K562 (cell line): ENCODE measurements at regions of chr7 and their contacts with region 1.

Region 1: DNA sequence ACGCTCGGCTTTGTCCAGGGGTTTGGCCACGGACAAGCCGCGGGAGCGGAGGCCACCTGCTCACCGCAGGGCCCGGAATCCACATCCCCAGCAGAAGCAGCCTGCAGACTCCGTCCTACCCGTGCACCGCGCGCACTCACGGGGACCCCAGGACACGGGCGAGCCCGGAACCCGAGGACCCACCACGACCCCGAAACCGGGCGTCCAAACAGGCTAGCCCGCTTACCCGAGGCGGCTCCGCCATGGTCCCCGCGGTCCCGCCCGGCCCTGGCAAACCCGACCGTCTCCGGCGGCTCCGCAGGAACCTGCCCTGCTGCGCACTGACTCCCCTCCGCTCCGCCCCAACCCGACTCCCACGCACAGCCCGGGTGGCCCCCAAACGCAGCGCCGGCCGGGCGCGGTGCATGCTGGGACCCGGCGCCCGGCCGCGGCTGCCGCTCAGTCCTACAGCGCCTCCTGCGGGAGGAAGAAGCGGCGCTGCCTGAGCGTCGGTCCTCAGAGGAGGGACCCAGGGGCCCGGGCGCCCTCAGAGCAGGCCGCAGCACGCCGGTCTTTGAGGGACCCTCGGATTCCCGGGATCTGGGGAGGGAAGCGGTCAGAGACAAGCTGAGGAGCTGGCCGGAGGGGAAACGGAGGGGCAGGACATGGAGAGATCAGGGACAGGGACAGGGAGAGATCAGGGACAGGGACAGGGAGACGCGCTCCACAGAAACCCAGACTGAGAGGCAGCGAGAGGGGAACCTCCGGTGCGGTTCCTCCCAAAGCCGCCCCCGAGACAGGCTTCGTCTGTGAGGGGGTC is at the start of gene ZNF786:
- DNase-seq: peak; percentile 96 to 99 (median 98)
- ATAC-seq: peak; percentile 93
- H3K4me3 ChIP-seq: peak within 1 kb of the TSS; percentile 93
- H3K27ac ChIP-seq: peak within 1 kb of the TSS; percentile 74
- H3K4me1 ChIP-seq: peaks cover 7 to 29% of the 10 kb centered on the region in 2 experiments
- H3K27me3 ChIP-seq: no peaks in the 10 kb centered on the region
- CTCF ChIP-seq: peak; percentile 97 to 98 (median 98)
- EP300 ChIP-seq: peak; percentile 57
- POLR2A ChIP-seq: peak; percentile 87
- RAD21 ChIP-seq: peak; percentile 92 to 98
- polyA plus RNA-seq, gene ZNF786: 0.31 to 0.49 TPM

Region 2: GRCh38 chr7:148503875-148504487 is 586.6 kb before region 1 on chr7:
- CTCF ChIA-PET with region 1: interaction called, 3 read pairs
- POLR2A ChIA-PET with region 1: no interaction called
- in situ Hi-C with region 1: no loop called
- intact Hi-C with region 1: loop called (anchors 5 kb)
- DNase-seq: peak; percentile 27 to 53 (median 47)
- ATAC-seq: peak; percentile 37; the same call in 1 of the 3 replicates
- H3K4me3 ChIP-seq: no peak overlapping the region
- H3K27ac ChIP-seq: no peak overlapping the region
- H3K4me1 ChIP-seq: no peaks in the 10 kb centered on the region
- H3K27me3 ChIP-seq: peaks cover 23 to 50% of the 10 kb centered on the region in 2 experiments; a peak in 4 of 5 replicates
- CTCF ChIP-seq: peak; percentile 59 to 95 (median 67); a peak in 5 of 6 replicates
- EP300 ChIP-seq: no peak
- POLR2A ChIP-seq: no peak
- RAD21 ChIP-seq: peak; percentile 90 to 91

Region 3: GRCh38 chr7:148927123-148928045 is 163.2 kb before region 1 on chr7:
- CTCF ChIA-PET with region 1: no interaction called
- POLR2A ChIA-PET with region 1: no interaction called
- in situ Hi-C with region 1: no loop called
- intact Hi-C with region 1: no loop called
- DNase-seq: no peak
- ATAC-seq: no peak
- H3K4me3 ChIP-seq: no peak overlapping the region
- H3K27ac ChIP-seq: no peak overlapping the region
- H3K4me1 ChIP-seq: no peaks in the 10 kb centered on the region; a peak in 1 of 5 replicates
- H3K27me3 ChIP-seq: no peaks in the 10 kb centered on the region
- CTCF ChIP-seq: no peak
- EP300 ChIP-seq: no peak
- POLR2A ChIP-seq: no peak
- RAD21 ChIP-seq: no peak

Region 4: GRCh38 chr7:148962823-148963582 is 127.6 kb before region 1 on chr7:
- CTCF ChIA-PET with region 1: no interaction called
- POLR2A ChIA-PET with region 1: no interaction called
- in situ Hi-C with region 1: no loop called
- intact Hi-C with region 1: loop called (anchors 2 kb)
- DNase-seq: peak; percentile 61 to 86 (median 72)
- ATAC-seq: peak; percentile 65
- H3K4me3 ChIP-seq: peak overlapping the region; percentile 49
- H3K27ac ChIP-seq: peak overlapping the region; percentile 62
- H3K4me1 ChIP-seq: peaks cover 16 to 32% of the 10 kb centered on the region in 2 experiments; a peak in 4 of 5 replicates
- H3K27me3 ChIP-seq: no peaks in the 10 kb centered on the region
- CTCF ChIP-seq: peak; percentile 89 to 98 (median 97)
- EP300 ChIP-seq: peak; percentile 41; the same call in 1 of the 2 replicates
- POLR2A ChIP-seq: no peak
- RAD21 ChIP-seq: peak; percentile 95 to 96

Region 5: GRCh38 chr7:149005241-149006050 is 85.2 kb before region 1 on chr7:
- CTCF ChIA-PET with region 1: interaction called, 24 read pairs
- POLR2A ChIA-PET with region 1: interaction called, 3 read pairs
- in situ Hi-C with region 1: no loop called
- intact Hi-C with region 1: loop called (anchors 1 kb)
- DNase-seq: peak; percentile 81 to 92 (median 86)
- ATAC-seq: peak; percentile 94
- H3K4me3 ChIP-seq: no peak overlapping the region
- H3K27ac ChIP-seq: no peak overlapping the region
- H3K4me1 ChIP-seq: peaks cover 0 to 6% of the 10 kb centered on the region in 2 experiments; a peak in 1 of 5 replicates
- H3K27me3 ChIP-seq: no peaks in the 10 kb centered on the region
- CTCF ChIP-seq: peak; percentile 89 to 98 (median 91)
- EP300 ChIP-seq: no peak
- POLR2A ChIP-seq: no peak
- RAD21 ChIP-seq: peak; percentile 75 to 78

Region 6: GRCh38 chr7:149195180-149196150 is 104.9 kb after region 1 on chr7 and contains the start of gene ZNF282:
- CTCF ChIA-PET with region 1: no interaction called
- POLR2A ChIA-PET with region 1: no interaction called
- in situ Hi-C with region 1: no loop called
- intact Hi-C with region 1: loop called (anchors 5 kb)
- DNase-seq: peak; percentile 95 to 98 (median 98)
- ATAC-seq: peak; percentile 97
- H3K4me3 ChIP-seq: peak within 1 kb of the TSS; percentile 99
- H3K27ac ChIP-seq: peak within 1 kb of the TSS; percentile 88
- H3K4me1 ChIP-seq: peaks cover 14 to 31% of the 10 kb centered on the region in 2 experiments; a peak in 4 of 5 replicates
- H3K27me3 ChIP-seq: no peaks in the 10 kb centered on the region
- CTCF ChIP-seq: peak; percentile 89 to 95 (median 93)
- EP300 ChIP-seq: peak; percentile 17; the same call in 1 of the 2 replicates
- POLR2A ChIP-seq: peak; percentile 92
- RAD21 ChIP-seq: peak; percentile 69 to 71
- polyA plus RNA-seq, gene ZNF282: 0.76 to 1.3 TPM